Activated B cell treated with CpG ODN at 0.5 μM for 24 hours (primary cell): ENCODE measurements at regions of chr3 and their contacts with region 1.

Region 1: GRCh38 chr3:183252973-183253901 is at the start of gene B3GNT5:
- DNase-seq: peak; percentile 35
- ATAC-seq: peak; percentile 59
- H3K4me3 Mint-ChIP-seq: peak within 1 kb of the TSS; percentile 78
- H3K27ac Mint-ChIP-seq: no peak within 1 kb of the TSS
- H3K4me1 Mint-ChIP-seq: peaks cover 4% of the 10 kb centered on the region
- H3K27me3 Mint-ChIP-seq: peaks cover 40% of the 10 kb centered on the region
- CTCF ChIP-seq: no peak
- total RNA-seq, gene B3GNT5: 0.37 and 0.38 TPM in 2 replicates

Region 2: DNA sequence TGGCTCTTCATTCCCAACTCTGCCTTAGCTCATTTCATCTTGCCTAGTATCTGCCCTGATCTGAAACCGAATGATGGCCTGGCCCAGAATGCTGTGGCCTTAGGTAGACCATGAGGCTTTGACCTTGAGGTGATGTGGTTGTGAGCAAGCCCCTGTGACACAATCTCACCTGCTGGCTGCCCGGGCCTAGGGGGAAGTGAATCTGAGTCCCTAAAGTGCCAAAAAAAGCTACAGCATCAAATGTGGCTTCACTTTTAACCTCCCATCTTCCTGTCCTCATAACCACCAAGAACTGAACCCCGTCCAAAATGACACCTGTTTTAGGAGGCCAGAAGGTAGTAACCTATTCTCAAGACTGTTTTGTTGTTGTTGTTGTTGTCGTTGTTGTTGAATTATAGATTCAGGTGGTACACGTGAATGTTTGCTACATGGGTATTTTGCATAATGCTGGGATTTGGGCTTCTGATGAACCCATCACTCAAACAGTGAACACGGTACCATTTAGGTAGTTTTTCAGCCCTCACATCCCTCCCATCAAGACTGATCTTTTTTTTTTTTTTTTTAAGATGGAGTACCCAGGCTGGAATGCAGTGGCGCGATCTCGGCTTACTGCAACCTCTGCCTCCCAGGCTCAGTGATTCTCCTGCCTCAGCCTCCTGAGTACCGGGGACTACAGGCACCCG is 208.5 kb before region 1 on chr3:
- CTCF ChIA-PET with region 1: no interaction called
- POLR2A ChIA-PET with region 1: no interaction called
- intact Hi-C with region 1: no loop called
- DNase-seq: no peak
- ATAC-seq: no peak
- H3K4me3 Mint-ChIP-seq: no peak overlapping the region
- H3K27ac Mint-ChIP-seq: peak overlapping the region; percentile 36
- H3K4me1 Mint-ChIP-seq: peaks cover 36% of the 10 kb centered on the region
- H3K27me3 Mint-ChIP-seq: no peaks in the 10 kb centered on the region
- CTCF ChIP-seq: no peak

Region 3: GRCh38 chr3:183239046-183239445 is 14.2 kb before region 1 on chr3:
- CTCF ChIA-PET with region 1: no interaction called
- POLR2A ChIA-PET with region 1: no interaction called
- intact Hi-C with region 1: no loop called
- DNase-seq: no peak
- ATAC-seq: no peak
- H3K4me3 Mint-ChIP-seq: no peak overlapping the region
- H3K27ac Mint-ChIP-seq: no peak overlapping the region
- H3K4me1 Mint-ChIP-seq: no peaks in the 10 kb centered on the region
- H3K27me3 Mint-ChIP-seq: peaks cover 27% of the 10 kb centered on the region
- CTCF ChIP-seq: no peak

Region 4: DNA sequence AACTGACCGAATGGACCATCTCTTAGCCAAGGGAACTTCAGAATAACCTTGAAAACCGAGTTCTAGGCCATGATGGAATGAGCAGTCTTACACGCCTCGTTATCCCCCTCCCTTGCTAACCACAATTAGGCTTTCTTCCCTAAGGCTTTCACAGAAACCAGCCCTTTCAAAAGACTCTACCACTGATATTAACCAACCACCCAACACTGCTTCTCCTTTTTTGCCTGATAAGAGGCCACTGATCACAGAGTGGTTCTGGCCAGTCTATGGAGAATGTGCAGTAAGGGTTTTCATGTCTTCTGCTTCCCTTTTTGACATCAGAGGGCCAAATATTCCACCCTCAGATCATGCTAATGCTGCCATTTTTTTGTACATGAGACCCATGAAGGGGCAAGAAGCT is 115.9 kb after region 1 on chr3:
- CTCF ChIA-PET with region 1: no interaction called
- POLR2A ChIA-PET with region 1: no interaction called
- intact Hi-C with region 1: loop called (anchors 5 kb)
- DNase-seq: no peak
- ATAC-seq: no peak
- H3K4me3 Mint-ChIP-seq: no peak overlapping the region
- H3K27ac Mint-ChIP-seq: no peak overlapping the region
- H3K4me1 Mint-ChIP-seq: peaks cover 12% of the 10 kb centered on the region
- H3K27me3 Mint-ChIP-seq: peaks cover 5% of the 10 kb centered on the region
- CTCF ChIP-seq: no peak